Natural killer cell (primary cell): ENCODE measurements at regions of chr17 and their contacts with region 1.

Region 1: GRCh38 chr17:47066841-47067682 is 88.0 kb upstream of the RPRML start:
- DNase-seq: peak; percentile 67 to 92
- ATAC-seq: peak; percentile 99 to 100 (median 100)
- H3K4me3 ChIP-seq: peak overlapping the region; percentile 63
- H3K4me3 Mint-ChIP-seq: peak overlapping the region; percentile 93
- H3K27ac ChIP-seq: peak overlapping the region; percentile 78
- H3K27ac Mint-ChIP-seq: peak overlapping the region; percentile 91 to 99
- H3K4me1 ChIP-seq: peaks cover 9% of the 10 kb centered on the region
- H3K4me1 Mint-ChIP-seq: peaks cover 27 to 34% of the 10 kb centered on the region in 2 donors
- H3K27me3 ChIP-seq: no peaks in the 10 kb centered on the region
- H3K27me3 Mint-ChIP-seq: no peaks in the 10 kb centered on the region
- CTCF ChIP-seq: no peak

Region 2: DNA sequence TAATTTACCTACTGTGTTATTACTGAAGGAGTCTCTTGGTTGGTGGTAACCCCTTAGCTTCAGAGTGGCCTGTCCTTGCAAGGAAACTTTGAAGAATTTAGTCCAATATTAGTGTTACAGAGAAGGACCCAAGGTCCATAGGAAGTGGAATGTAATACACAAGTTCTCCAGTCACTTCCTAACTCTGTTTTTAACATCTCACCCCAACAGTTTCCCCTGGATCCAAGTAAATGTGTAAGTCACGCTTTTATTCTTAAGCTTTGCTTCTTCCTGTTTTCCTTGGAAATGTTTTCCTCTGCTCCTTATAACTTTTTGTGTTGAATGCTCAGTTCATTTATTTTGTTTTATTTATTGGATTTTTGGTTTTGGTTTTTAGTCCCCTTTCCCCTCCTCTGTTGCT is 62.2 kb before region 1 on chr17:
- intact Hi-C with region 1: no loop called
- DNase-seq: no peak
- ATAC-seq: no peak
- H3K4me3 ChIP-seq: no peak overlapping the region
- H3K4me3 Mint-ChIP-seq: no peak overlapping the region
- H3K27ac ChIP-seq: no peak overlapping the region
- H3K27ac Mint-ChIP-seq: no peak overlapping the region
- H3K4me1 ChIP-seq: no peaks in the 10 kb centered on the region
- H3K4me1 Mint-ChIP-seq: peaks cover 0 to 6% of the 10 kb centered on the region in 2 donors
- H3K27me3 ChIP-seq: no peaks in the 10 kb centered on the region
- H3K27me3 Mint-ChIP-seq: no peaks in the 10 kb centered on the region
- CTCF ChIP-seq: no peak

Region 3: DNA sequence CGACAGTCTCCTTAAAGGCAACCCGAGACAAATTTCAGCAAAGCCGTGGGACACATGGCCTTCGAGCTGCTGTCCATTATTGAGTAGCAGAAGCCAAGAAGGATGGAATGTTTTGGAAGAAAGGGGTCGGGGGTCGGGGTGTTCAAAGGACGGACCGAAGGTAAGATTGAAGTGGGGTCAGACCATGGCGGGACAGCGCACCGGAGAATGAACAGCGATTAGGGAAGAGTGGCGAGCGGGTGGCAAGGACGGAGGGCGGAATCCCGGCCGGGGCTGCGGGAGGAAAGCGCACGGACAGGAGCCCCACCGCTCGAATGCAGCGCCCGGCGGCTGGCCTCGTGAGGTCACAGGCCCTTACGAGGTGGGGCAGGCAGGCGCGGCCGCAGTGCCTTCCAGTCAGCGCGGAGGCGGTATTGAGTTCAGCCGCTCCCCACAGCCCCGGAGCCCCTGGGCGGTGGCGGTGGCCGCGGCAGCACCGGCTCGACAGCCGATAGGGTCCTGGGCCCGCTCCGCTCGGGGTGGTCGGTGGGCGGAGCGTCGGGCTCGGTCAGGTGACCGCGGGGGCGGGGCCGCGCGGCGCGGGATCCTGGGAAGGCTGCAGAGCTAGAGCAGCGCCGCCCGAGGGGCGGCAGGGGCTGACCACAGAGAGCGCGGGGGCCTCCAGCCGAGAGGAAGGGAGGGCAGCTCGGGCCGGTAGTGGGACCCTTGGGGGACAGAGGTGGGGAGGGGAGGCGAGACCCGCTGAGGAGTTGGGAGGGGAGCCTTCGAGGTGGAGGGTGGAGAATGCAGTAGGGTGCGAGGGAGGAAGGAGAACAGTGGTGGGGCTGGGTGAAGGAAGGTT is 256.5 kb after region 1 on chr17 and contains the start of gene EFCAB13:
- intact Hi-C with region 1: loop called (anchors 5 kb)
- DNase-seq: peak; percentile 74 to 89
- ATAC-seq: peak; percentile 85 to 91 (median 90)
- H3K4me3 ChIP-seq: peak within 1 kb of the TSS; percentile 80
- H3K4me3 Mint-ChIP-seq: peak within 1 kb of the TSS; percentile 98
- H3K27ac ChIP-seq: peak within 1 kb of the TSS; percentile 87
- H3K27ac Mint-ChIP-seq: peak within 1 kb of the TSS; percentile 70 to 87
- H3K4me1 ChIP-seq: peaks cover 11% of the 10 kb centered on the region
- H3K4me1 Mint-ChIP-seq: peaks cover 15 to 22% of the 10 kb centered on the region in 2 donors
- H3K27me3 ChIP-seq: no peaks in the 10 kb centered on the region
- H3K27me3 Mint-ChIP-seq: peaks cover 11 to 19% of the 10 kb centered on the region in 2 donors
- CTCF ChIP-seq: no peak
- total RNA-seq, gene EFCAB13: 2.4 to 11.9 (median 5.8) TPM